Heart right ventricle (tissue), 16 donors: ENCODE measurements at regions of chr18 and their contacts with region 1.

Region 1: GRCh38 chr18:25351777-25352628 is at the start of gene ZNF521:
- DNase-seq: peak; percentile 86
- ATAC-seq: peak; percentile 75 to 93 (median 86)
- H3K4me3 ChIP-seq: peak within 1 kb of the TSS; percentile 68 to 91 (median 79)
- H3K27ac ChIP-seq: peak within 1 kb of the TSS; percentile 91 to 97 (median 94)
- H3K4me1 ChIP-seq: peaks cover 3 to 29% (median 15%) of the 10 kb centered on the region in 9 donors
- H3K27me3 ChIP-seq: peaks cover 0 to 78% (median 0%) of the 10 kb centered on the region in 7 donors
- CTCF ChIP-seq: peak in 7 of 9 donors; percentile 13 to 48 (median 31)
- total RNA-seq, gene ZNF521: 10.5 to 26.4 (median 15.9) TPM

Region 2: GRCh38 chr18:24293254-24293653 is 1058.7 kb before region 1 on chr18:
- intact Hi-C with region 1: no loop called
- DNase-seq: no peak
- ATAC-seq: no peak
- H3K4me3 ChIP-seq: no peak overlapping the region
- H3K27ac ChIP-seq: no peak overlapping the region
- H3K4me1 ChIP-seq: no peaks in the 10 kb centered on the region
- H3K27me3 ChIP-seq: no peaks in the 10 kb centered on the region
- CTCF ChIP-seq: no peak

Region 3: DNA sequence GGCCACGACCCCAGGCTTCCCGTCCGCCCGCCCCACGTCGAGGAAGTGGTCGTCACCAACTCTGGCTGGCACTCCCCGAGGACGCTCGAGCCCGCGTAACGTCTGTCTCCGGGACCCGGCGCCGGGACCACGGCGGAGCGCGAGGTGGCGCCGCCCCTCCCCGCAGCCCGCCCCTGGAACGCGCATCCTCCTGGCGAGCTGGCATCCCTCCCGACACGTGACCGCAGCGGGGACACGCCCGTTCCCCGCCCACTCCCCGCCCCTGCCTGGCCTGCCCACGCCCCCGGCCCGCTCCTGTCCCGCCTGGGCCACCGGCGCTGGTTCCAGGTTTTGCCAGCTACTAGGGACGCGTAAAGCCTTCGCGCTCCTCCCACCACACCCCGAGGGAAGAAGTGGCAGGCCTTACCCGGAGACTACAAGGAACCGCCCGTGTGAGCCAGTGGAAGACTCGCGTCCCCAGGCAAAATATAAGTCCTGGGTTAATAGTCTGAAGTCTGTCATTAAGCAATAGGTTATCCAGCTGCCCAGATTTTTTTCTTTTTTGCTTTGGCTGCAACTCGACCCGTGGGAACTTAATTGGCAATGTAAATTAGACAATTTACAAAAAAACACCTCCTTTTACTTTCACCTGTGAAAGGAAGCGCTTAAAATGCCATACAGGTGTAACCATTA is 954.2 kb before region 1 on chr18 and contains the start of gene OSBPL1A:
- intact Hi-C with region 1: loop called in 1 of 10 experiments (anchors 10 kb)
- DNase-seq: peak; percentile 94 to 96
- ATAC-seq: peak; percentile 97 to 99 (median 98)
- H3K4me3 ChIP-seq: peak within 1 kb of the TSS; percentile 61 to 84 (median 76)
- H3K27ac ChIP-seq: peak within 1 kb of the TSS in 9 of 10 donors; percentile 66 to 89 (median 80)
- H3K4me1 ChIP-seq: peaks cover 0 to 36% (median 9%) of the 10 kb centered on the region in 9 donors
- H3K27me3 ChIP-seq: no peaks in the 10 kb centered on the region
- CTCF ChIP-seq: peak in 3 of 9 donors; percentile 11 to 30 (median 22)
- total RNA-seq, gene OSBPL1A: 50.9 to 85.6 (median 64.8) TPM

Region 4: DNA sequence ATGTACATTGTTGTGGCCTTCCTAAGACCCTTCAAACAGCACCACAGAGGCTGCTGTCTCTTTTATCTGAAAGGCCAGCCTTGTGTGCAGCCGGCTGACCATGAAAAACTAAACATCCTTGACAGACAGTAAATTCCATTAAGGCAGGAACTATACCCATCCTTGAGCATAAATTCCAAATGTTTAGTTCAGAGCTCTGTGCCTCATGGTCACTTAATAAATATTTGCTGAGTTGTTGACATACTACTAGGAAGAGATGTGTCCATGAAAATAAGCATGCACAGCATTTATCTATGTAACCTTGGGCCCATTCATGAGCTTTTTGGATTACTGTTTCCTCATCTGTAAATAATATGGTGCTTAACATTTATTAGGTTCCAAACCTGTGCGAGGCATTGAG is 466.7 kb before region 1 on chr18:
- intact Hi-C with region 1: loop called in 4 of 10 experiments (anchors 5 to 10 kb)
- DNase-seq: no peak
- ATAC-seq: no peak
- H3K4me3 ChIP-seq: no peak overlapping the region
- H3K27ac ChIP-seq: no peak overlapping the region
- H3K4me1 ChIP-seq: no peaks in the 10 kb centered on the region
- H3K27me3 ChIP-seq: no peaks in the 10 kb centered on the region
- CTCF ChIP-seq: no peak

Region 5: DNA sequence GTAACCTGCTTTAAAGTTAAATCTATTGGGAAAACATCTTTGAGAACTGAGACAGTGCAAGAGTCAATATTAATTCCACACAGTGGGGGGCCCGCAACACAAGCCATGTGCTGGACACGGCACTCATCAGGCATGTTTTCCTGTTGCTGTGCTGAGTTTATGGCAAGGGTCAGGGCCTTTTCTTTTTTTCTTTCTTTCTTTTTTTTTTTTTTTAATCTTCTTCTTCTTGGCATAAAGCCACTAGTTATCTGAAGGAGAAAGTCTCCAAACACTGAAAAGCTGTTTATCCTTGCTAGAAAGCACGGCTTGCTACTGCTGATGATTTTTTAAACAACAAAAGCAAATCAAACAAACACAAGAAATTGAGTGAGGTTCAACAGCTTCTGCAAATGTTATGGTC is 252.1 kb before region 1 on chr18:
- intact Hi-C with region 1: loop called in 3 of 10 experiments (anchors 10 kb)
- DNase-seq: no peak
- ATAC-seq: no peak
- H3K4me3 ChIP-seq: no peak overlapping the region
- H3K27ac ChIP-seq: no peak overlapping the region
- H3K4me1 ChIP-seq: peaks cover 2 to 44% (median 15%) of the 10 kb centered on the region in 9 donors
- H3K27me3 ChIP-seq: no peaks in the 10 kb centered on the region
- CTCF ChIP-seq: no peak

Region 6: GRCh38 chr18:25230658-25231326 is 121.2 kb before region 1 on chr18:
- intact Hi-C with region 1: loop called in 6 of 10 experiments (anchors 2 to 5 kb)
- DNase-seq: peak; percentile 61 to 81
- ATAC-seq: peak; percentile 84 to 91 (median 87)
- H3K4me3 ChIP-seq: peak overlapping the region in 1 of 10 donors; percentile 17
- H3K27ac ChIP-seq: peak overlapping the region; percentile 24 to 81 (median 72)
- H3K4me1 ChIP-seq: peaks cover 2 to 77% (median 64%) of the 10 kb centered on the region in 9 donors
- H3K27me3 ChIP-seq: no peaks in the 10 kb centered on the region
- CTCF ChIP-seq: no peak

Region 7: DNA sequence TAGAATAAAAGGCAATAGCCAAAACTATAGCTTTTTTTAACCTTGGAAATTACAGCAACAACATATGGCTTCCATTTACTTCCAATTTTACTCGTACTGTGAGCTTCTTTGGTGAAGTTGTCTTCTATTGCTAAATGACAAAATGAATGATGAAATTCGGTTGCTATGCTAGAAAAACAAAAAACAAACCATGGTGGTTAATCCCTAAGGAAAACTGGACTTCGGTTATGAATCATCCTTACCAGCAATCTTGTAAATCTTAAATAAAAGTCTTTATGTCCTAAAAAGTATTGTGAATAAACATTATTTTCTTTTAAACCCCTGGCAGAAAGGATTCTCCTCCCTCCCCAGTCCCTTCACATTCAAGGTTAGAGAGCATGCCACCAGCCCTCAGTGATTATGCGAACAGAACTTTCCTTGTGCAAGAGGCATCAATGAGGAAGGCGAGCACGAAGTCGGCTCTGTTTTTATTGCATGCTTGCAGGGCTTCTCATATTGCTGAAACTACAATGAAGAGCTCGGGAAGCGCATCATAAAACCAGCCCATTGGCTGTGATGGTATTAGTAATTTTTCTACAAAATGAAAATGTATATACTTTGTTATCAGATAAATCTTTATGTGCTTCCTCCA is 62.9 kb before region 1 on chr18:
- intact Hi-C with region 1: loop called in 5 of 10 experiments (anchors 2 to 10 kb)
- DNase-seq: peak in 1 of 2 donors; percentile 7
- ATAC-seq: peak in 1 of 8 donors; percentile 30
- H3K4me3 ChIP-seq: no peak overlapping the region
- H3K27ac ChIP-seq: peak overlapping the region in 7 of 10 donors; percentile 26 to 64 (median 41)
- H3K4me1 ChIP-seq: peaks cover 0 to 50% (median 34%) of the 10 kb centered on the region in 9 donors
- H3K27me3 ChIP-seq: no peaks in the 10 kb centered on the region
- CTCF ChIP-seq: no peak

Region 8: DNA sequence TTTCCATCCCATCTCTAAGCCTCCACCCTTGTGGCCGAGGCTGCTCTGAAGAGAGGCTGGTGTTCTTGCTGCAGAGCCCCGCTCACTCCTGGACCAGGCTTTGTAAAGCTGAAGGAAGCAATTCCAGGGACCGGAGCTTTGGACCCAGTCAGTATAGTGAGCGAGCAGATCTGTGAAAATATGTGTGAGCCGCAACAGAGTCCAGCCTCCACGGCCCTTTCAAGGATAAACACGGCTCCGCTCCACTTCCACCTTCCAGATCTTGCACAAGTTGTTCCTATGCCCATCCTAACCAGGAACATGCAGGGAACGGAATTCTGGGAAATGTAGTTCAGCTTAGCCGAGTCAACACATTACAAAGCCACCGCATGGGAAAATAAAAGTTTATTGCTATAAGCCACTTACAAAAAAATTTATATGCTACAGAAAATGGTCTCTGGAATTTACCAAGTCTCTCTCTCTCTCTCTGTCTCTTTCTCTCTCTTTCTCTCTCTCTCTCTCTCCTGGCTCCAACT is 151.6 kb after region 1 on chr18:
- intact Hi-C with region 1: loop called in 5 of 10 experiments (anchors 5 to 10 kb)
- DNase-seq: peak; percentile 31 to 63
- ATAC-seq: peak; percentile 85 to 99 (median 94)
- H3K4me3 ChIP-seq: peak overlapping the region in 9 of 10 donors; percentile 28 to 55 (median 50)
- H3K27ac ChIP-seq: peak overlapping the region in 3 of 10 donors; percentile 15 to 47 (median 17)
- H3K4me1 ChIP-seq: peaks cover 0 to 10% (median 3%) of the 10 kb centered on the region in 9 donors
- H3K27me3 ChIP-seq: no peaks in the 10 kb centered on the region
- CTCF ChIP-seq: no peak